ENCODE measurements at regions of chr10 and their contacts with region 1.

Region 1: GRCh38 chr10:43689955-43690771 is 41.5 kb upstream of the ZNF32 start:
- DNase-seq: peak; percentile 93
- H3K4me3 ChIP-seq: peak overlapping the region; percentile 56 to 69 (median 59)
- H3K27ac ChIP-seq: peak overlapping the region; percentile 72 to 81 (median 76)
- H3K4me1 ChIP-seq: peaks cover 22 to 31% (median 30%) of the 10 kb centered on the region in 4 donors
- H3K27me3 ChIP-seq: no peaks in the 10 kb centered on the region
- CTCF ChIP-seq: peak; percentile 85 to 89 (median 88)
- EP300 ChIP-seq: no peak
- POLR2A ChIP-seq: no peak

Region 2: DNA sequence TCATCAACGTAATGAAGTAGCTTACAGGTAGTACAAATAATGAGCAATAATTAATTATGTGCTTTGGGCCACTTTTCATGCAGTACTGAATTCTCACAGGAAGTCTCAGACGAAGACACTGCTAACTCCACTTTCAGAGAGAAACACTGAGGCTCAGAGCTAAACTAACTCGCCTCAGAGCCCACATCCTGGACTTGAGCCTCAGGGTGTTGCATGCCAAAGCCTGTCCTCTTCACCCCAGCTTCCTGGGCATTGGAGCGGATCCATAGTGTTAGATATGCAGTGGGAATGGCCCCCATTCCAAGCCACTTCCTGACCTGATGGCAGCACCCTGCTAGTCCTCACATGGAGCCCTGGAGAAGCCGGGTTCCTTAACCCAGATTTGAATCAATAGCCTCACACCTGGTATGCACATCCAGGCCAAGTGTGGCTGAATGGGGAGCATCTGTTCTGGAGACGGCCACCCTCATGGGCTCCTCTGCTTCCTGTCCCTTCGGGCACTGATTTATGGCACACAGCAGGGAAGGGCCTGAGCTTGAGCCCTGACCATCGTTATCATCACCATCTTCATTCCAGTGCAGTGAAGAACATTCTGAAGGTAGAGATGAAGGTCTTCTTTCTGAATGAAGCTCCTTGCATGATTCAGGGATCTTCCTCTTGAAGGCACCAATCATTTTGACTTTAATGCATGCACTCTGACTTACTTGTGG is 223.7 kb after region 1 on chr10:
- intact Hi-C with region 1: loop called (anchors 5 kb)
- DNase-seq: peak; percentile 66
- H3K4me3 ChIP-seq: no peak overlapping the region
- H3K27ac ChIP-seq: no peak overlapping the region
- H3K4me1 ChIP-seq: peaks cover 14 to 23% (median 21%) of the 10 kb centered on the region in 4 donors
- H3K27me3 ChIP-seq: no peaks in the 10 kb centered on the region
- CTCF ChIP-seq: no peak
- EP300 ChIP-seq: no peak
- POLR2A ChIP-seq: no peak

Region 3: DNA sequence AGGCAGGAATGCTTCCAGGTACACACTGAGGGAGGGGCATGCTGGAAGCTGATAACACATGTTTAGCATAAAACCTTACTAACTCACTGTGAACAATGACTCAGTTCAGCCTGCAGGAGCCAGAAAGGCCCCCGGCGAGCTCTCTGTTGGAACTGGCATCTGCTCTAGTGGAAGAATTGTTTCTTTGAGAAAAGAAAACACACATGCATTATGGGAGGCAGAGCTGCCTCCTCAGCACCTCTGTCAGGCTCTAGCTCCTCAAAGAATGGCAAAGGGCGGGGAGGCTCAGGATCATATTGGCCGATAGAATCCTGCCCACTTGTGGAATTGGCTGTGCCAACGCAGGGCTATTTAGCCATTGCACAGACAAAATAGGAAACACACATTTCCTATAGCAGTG is 356.4 kb after region 1 on chr10:
- intact Hi-C with region 1: loop called (anchors 5 kb)
- DNase-seq: no peak
- H3K4me3 ChIP-seq: no peak overlapping the region
- H3K27ac ChIP-seq: peak overlapping the region in 3 of 4 donors; percentile 1 to 19 (median 16)
- H3K4me1 ChIP-seq: peaks cover 11 to 38% (median 33%) of the 10 kb centered on the region in 4 donors
- H3K27me3 ChIP-seq: no peaks in the 10 kb centered on the region
- CTCF ChIP-seq: peak in 1 of 3 experiments; percentile 29
- EP300 ChIP-seq: no peak
- POLR2A ChIP-seq: no peak

Region 4: DNA sequence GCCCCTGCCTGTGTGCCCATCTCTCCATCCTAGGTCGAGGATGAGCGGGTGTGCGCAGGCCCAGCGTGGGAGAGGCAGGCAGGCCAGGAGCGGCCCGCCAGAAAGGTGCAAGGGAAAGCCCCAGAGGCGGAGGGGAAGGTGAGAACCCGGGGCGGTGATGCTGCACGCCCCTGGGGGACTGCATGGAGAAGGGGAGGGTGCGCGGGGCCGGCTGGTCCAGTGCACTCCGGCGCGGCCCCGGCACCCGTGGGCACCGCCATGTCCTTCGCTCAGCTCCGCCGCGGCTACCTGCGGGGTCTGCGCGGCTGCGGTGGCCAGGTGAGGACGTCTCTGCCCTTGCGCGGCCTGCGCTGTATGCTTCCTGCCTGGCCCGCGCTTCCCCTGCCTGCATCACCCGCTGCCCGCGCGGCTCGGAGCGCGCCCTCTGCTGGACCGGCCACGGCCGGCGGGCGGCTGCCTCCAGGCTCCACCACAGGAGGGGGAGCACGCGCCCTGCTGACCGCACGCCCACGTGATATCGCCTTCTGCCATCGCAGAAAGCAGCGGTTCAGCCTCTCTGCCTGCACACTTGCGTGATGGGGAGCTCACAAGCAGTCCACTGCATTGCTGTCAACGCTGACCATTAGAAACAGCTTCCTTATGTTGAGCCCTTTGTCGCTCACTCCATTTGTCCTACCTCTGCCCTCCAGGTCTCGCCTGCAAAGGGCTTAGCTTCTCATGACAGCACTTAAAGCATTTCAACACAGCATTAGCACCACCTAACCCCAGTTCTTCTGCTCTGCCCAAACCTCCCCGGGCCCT is 620.8 kb after region 1 on chr10:
- intact Hi-C with region 1: loop called (anchors 5 kb)
- DNase-seq: peak; percentile 95
- H3K4me3 ChIP-seq: peak overlapping the region; percentile 40 to 59 (median 46)
- H3K27ac ChIP-seq: peak overlapping the region in 1 of 4 donors; percentile 48
- H3K4me1 ChIP-seq: peaks cover 4 to 32% (median 23%) of the 10 kb centered on the region in 4 donors
- H3K27me3 ChIP-seq: no peaks in the 10 kb centered on the region
- CTCF ChIP-seq: peak; percentile 88 to 96 (median 95)
- EP300 ChIP-seq: no peak
- POLR2A ChIP-seq: no peak

Region 5: GRCh38 chr10:44386546-44387052 is 696.4 kb after region 1 on chr10:
- intact Hi-C with region 1: loop called (anchors 5 kb)
- DNase-seq: no peak
- H3K4me3 ChIP-seq: peak overlapping the region in 1 of 4 donors; percentile 17
- H3K27ac ChIP-seq: peak overlapping the region in 1 of 4 donors; percentile 78
- H3K4me1 ChIP-seq: peaks cover 4 to 49% (median 44%) of the 10 kb centered on the region in 4 donors
- H3K27me3 ChIP-seq: peaks cover 0 to 44% (median 2%) of the 10 kb centered on the region in 4 donors
- CTCF ChIP-seq: peak; percentile 77 to 92 (median 85)
- EP300 ChIP-seq: no peak
- POLR2A ChIP-seq: no peak